Brain microvascular endothelial cell (primary cell): ENCODE measurements at regions of chr2 and their contacts with region 1.

Region 1: GRCh38 chr2:101435001-101435862 is 39.7 kb downstream of the RFX8 start:
- DNase-seq: no peak
- H3K4me3 ChIP-seq: no peak overlapping the region
- H3K27ac ChIP-seq: no peak overlapping the region
- H3K27me3 ChIP-seq: no peaks in the 10 kb centered on the region
- CTCF ChIP-seq: no peak

Region 2: GRCh38 chr2:101295895-101296294 is 139.3 kb before region 1 on chr2:
- in situ Hi-C with region 1: no loop called
- DNase-seq: peak; percentile 78
- H3K4me3 ChIP-seq: no peak overlapping the region
- H3K27ac ChIP-seq: peak overlapping the region; percentile 31
- H3K27me3 ChIP-seq: no peaks in the 10 kb centered on the region
- CTCF ChIP-seq: no peak

Region 3: DNA sequence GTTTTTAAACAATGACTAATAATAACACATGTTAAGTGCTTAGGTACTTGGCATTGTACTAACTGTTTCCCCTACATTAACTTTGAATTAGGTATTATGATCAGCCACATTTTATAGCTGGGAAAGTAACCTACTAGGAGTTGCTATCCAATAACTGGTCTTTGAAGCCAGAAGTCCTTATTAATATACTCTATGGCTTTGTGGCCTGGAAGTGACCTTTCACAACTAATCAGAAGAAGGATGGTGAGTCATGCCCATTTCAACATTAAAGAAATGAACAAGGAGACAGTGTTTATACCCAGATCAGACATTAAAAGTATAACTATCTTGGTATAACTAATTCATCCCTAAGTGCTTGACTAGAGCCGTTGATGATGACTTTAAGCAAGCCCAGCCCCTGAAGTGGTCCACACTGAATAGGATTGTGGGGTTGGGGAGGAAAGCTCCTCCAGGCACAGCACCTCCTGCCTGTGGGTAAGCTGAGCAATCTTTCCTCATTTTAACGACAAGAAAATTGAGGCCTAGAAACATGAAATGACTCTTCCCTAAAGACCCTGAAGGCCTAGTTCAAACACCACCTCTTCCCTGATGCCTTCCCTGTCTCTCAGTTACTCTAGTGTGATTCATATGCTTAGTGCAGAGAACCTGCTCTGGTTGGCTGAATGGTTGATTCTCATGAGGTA is 111.3 kb after region 1 on chr2:
- in situ Hi-C with region 1: no loop called
- DNase-seq: peak; percentile 16
- H3K4me3 ChIP-seq: no peak overlapping the region
- H3K27ac ChIP-seq: no peak overlapping the region
- H3K27me3 ChIP-seq: no peaks in the 10 kb centered on the region
- CTCF ChIP-seq: no peak

Region 4: DNA sequence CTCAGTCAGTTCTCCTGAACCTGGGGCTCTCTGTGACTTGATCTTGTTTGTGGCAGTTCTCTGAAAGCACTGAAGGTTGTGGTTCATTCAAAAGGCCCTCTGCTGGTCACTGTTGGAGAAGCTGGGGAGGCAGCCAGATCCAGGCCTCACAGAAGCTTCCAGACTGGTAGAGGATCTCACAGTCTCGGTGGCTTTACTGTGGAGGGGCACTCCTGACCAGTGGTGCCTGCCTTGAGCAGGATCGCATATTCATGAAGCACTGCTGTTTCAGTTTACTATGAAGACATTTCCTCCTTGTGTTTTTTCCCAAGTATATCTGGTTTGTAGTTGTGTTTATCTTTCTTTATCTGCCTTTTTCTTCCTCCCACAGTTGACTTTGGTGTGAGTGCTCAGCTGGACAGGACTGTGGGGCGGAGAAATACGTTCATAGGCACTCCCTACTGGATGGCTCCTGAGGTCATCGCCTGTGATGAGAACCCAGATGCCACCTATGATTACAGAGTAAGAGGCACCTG is 396.2 kb after region 1 on chr2:
- in situ Hi-C with region 1: loop called (anchors 25 kb)
- DNase-seq: peak; percentile 88
- H3K4me3 ChIP-seq: no peak overlapping the region
- H3K27ac ChIP-seq: peak overlapping the region; percentile 97
- H3K27me3 ChIP-seq: no peaks in the 10 kb centered on the region
- CTCF ChIP-seq: peak; percentile 90